SK-N-SH (cell line): ENCODE measurements at regions of chr6 and their contacts with region 1.

Region 1: GRCh38 chr6:28923318-28924102 is at the start of gene TRIM27:
- DNase-seq: peak; percentile 93
- H3K4me3 ChIP-seq: peak within 1 kb of the TSS; percentile 97
- H3K27ac ChIP-seq: peak within 1 kb of the TSS; percentile 80 to 93
- H3K4me1 ChIP-seq: peaks cover 6 to 13% of the 10 kb centered on the region in 2 experiments; a peak in 2 of 4 replicates
- H3K27me3 ChIP-seq: no peaks in the 10 kb centered on the region
- CTCF ChIP-seq: no peak
- EP300 ChIP-seq: no peak
- RAD21 ChIP-seq: no peak
- polyA plus RNA-seq, gene TRIM27: 43.8 and 67.4 TPM in 2 replicates

Region 2: DNA sequence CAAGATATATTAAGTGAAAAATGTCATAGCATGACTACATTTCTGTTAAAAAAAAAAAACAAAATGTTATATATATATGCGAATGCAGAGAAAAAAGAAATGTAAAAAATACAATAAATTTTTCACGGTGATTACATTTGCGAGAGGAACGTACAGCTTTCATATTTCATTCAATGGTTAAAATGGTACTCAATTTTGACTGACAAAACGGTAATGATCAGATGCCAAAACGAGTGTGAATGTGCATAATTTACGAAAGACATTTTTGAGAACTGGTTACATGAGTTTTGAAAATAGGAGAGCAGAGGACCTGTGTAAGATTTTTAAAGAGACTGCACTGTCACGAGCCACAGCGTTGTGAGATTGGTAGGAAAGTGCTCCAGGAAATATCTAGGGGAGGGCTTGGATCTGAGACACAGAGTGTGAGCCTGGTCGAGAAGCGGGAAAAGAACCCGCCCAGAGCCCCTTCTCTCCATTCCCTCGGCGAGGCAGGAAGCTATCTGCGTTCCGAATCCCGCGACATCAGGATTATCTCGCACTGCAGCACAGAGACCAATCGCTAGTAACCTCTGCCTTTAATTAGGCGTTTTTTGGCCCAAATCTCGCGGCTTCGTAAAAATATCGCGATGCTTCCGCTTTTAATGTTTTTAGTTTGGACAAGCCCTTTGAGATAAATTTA is 28.2 kb before region 1 on chr6:
- CTCF ChIA-PET with region 1: interaction called, 5 read pairs
- POLR2A ChIA-PET with region 1: interaction called, 18 read pairs
- DNase-seq: peak; percentile 87
- H3K4me3 ChIP-seq: peak overlapping the region; percentile 63 to 79
- H3K27ac ChIP-seq: peak overlapping the region; percentile 93 to 97
- H3K4me1 ChIP-seq: no peaks in the 10 kb centered on the region; a peak in 1 of 4 replicates
- H3K27me3 ChIP-seq: no peaks in the 10 kb centered on the region
- CTCF ChIP-seq: no peak
- EP300 ChIP-seq: no peak
- RAD21 ChIP-seq: no peak

Region 3: DNA sequence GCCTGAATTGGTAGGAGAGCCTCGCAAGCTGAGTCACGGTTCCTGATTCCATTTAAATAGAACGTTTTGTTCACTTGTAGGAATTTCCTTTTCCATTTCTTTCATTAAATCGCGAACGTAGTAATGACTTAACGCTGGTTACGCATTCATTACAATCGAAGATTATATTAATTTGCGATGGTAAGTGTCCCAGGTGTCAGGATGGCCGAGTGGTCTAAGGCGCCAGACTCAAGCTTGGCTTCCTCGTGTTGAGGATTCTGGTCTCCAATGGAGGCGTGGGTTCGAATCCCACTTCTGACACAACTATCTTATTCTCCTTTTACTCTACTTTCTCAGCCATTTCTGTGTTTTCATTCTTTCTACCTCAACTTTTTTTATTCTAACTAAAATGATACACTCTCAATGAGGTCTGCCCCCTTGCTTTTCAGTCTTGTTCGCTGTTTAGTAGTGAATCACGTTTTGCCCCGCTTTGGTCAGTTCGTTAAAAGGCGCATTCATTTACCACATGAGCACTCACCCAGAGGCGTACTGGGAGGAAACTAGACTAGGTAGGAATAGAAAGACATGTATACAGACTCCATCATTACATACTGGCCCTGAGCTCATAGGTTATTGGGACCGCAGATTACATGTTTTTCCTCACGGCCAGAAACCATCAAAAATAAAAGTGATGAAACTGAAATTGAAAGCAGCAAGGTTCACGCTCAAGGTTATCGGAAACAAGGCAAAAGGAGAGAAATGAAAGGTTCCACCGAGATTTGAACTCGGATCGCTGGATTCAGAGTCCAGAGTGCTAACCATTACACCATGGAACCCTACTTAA is 17.6 kb after region 1 on chr6:
- CTCF ChIA-PET with region 1: interaction called, 12 read pairs
- POLR2A ChIA-PET with region 1: interaction called, 6 read pairs
- DNase-seq: no peak
- H3K4me3 ChIP-seq: peak overlapping the region; percentile 83 to 89
- H3K27ac ChIP-seq: peak overlapping the region; percentile 68 to 75
- H3K4me1 ChIP-seq: peaks cover 0 to 10% of the 10 kb centered on the region in 2 experiments; a peak in 2 of 4 replicates
- H3K27me3 ChIP-seq: no peaks in the 10 kb centered on the region
- CTCF ChIP-seq: no peak
- EP300 ChIP-seq: peak; percentile 13 to 42; a peak in 2 of 4 replicates
- RAD21 ChIP-seq: no peak